ENCODE measurements at regions of chr15 and their contacts with region 1.

Region 1: DNA sequence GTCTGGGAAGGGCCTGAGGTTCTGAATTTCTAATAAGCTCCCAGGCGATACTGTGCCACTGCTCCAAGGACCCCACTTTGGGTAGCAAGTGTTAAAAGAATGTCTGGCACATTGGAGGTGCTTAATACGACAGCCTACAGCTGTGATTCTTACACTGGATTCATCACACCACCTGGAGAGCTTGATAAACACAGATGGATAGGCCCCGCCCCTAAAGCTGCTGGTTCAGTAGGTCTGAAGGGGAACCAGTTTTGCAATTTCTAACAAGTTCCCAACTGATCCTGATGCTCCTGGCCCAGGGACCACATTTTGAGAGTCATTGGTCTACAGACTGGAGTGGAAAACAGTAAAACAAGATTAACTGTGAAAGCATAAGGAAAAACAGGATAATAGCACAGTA is 124.8 kb upstream of the ST8SIA2 start:
- DNase-seq: no peak
- H3K4me3 ChIP-seq: no peak overlapping the region
- H3K27ac ChIP-seq: no peak overlapping the region
- H3K4me1 ChIP-seq: no peaks in the 10 kb centered on the region
- H3K27me3 ChIP-seq: peaks cover 60% of the 10 kb centered on the region
- CTCF ChIP-seq: no peak

Region 2: GRCh38 chr15:91844928-91845327 is 424.0 kb before region 1 on chr15:
- CTCF ChIA-PET with region 1: interaction called, 18 read pairs
- POLR2A ChIA-PET with region 1: no interaction called
- intact Hi-C with region 1: no loop called
- DNase-seq: no peak
- H3K4me3 ChIP-seq: no peak overlapping the region
- H3K27ac ChIP-seq: no peak overlapping the region
- H3K4me1 ChIP-seq: no peaks in the 10 kb centered on the region
- H3K27me3 ChIP-seq: no peaks in the 10 kb centered on the region
- CTCF ChIP-seq: no peak